Heart left ventricle (tissue), 16 donors: ENCODE measurements at regions of chr17 and their contacts with region 1.

Region 1: DNA sequence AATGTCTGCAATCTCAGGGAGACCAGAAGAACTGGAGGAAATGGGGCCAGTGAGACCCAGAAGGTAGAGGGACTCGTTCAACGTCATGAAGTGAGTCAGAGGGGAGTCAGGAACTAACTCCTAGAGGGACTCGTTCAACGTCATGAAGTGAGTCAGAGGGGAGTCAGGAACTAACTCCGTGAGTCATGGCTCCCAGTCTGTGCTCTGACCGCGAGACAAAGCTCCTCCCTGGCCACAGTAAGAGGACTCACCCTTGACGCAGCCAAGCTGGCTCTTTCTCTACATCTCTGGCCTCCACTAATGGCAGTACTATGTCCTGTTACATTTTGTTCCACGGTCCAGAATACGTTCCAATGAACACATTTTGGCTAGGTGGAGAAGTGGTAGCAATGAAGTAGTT is 902.5 kb downstream of the KCNJ2 start:
- DNase-seq: peak in 1 of 5 donors; percentile 28
- ATAC-seq: peak in 2 of 4 donors; percentile 34 to 45
- H3K4me3 ChIP-seq: no peak overlapping the region
- H3K27ac ChIP-seq: no peak overlapping the region
- H3K4me1 ChIP-seq: no peaks in the 10 kb centered on the region
- H3K27me3 ChIP-seq: no peaks in the 10 kb centered on the region
- CTCF ChIP-seq: no peak
- POLR2A ChIP-seq: no peak

Region 2: GRCh38 chr17:71052971-71053370 is 18.9 kb before region 1 on chr17:
- intact Hi-C with region 1: loop called in 1 of 10 experiments (anchors 2 kb)
- DNase-seq: no peak
- ATAC-seq: no peak
- H3K4me3 ChIP-seq: no peak overlapping the region
- H3K27ac ChIP-seq: no peak overlapping the region
- H3K4me1 ChIP-seq: no peaks in the 10 kb centered on the region
- H3K27me3 ChIP-seq: no peaks in the 10 kb centered on the region
- CTCF ChIP-seq: no peak
- POLR2A ChIP-seq: no peak

Region 3: DNA sequence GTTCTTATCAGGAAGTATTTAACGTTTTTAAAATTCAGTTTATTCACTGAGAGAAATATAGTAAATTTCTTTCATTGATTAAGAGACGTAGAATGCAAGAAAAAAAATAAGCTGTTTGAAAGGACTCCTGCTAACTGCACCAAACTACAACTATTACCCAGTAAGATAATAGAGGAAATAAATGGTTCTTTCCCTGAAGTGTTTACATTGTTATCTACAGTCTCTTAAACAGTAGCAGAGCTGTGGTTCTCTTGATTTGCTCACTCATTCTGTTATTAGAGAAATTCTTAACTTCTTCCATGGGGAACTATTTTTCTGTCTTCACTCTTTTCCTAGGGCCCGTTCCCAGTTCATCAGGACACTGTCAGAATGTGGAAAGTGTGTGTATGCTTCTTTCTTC is 70.5 kb after region 1 on chr17:
- intact Hi-C with region 1: loop called in 1 of 10 experiments (anchors 10 kb)
- DNase-seq: no peak
- ATAC-seq: no peak
- H3K4me3 ChIP-seq: no peak overlapping the region
- H3K27ac ChIP-seq: no peak overlapping the region
- H3K4me1 ChIP-seq: no peaks in the 10 kb centered on the region
- H3K27me3 ChIP-seq: no peaks in the 10 kb centered on the region
- CTCF ChIP-seq: no peak
- POLR2A ChIP-seq: no peak